AG04449 (cell line): ENCODE measurements at regions of chr22 and their contacts with region 1.

Region 1: DNA sequence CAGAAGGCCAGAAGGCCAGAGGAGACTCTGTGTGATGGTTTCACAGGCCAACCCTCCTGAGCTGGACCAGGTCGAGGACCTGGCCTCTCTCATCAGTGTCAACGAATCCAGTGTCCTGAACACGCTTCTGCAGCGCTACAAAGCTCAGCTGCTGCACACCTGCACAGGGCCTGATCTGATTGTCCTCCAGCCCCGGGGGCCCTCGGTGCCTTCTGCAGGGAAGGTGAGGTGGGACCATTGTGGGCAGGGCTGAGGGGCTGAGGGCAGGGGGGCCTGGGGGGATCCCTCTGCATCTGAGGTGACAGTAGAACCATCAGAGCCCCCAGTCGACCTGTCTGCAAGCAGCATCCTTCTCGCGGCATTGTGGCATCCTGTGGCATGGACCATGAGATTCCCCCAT is 30.3 kb downstream of the MYO18B start:
- DNase-seq: no peak
- H3K4me3 ChIP-seq: no peak overlapping the region
- CTCF ChIP-seq: no peak

Region 2: GRCh38 chr22:25791556-25791955 is 19.3 kb after region 1 on chr22:
- CTCF ChIA-PET with region 1: interaction called, 16 read pairs
- POLR2A ChIA-PET with region 1: no interaction called
- DNase-seq: no peak
- H3K4me3 ChIP-seq: no peak overlapping the region
- CTCF ChIP-seq: no peak

Region 3: GRCh38 chr22:25942856-25943411 is 170.6 kb after region 1 on chr22:
- CTCF ChIA-PET with region 1: no interaction called
- POLR2A ChIA-PET with region 1: no interaction called
- DNase-seq: no peak
- H3K4me3 ChIP-seq: no peak overlapping the region
- CTCF ChIP-seq: no peak